ENCODE measurements at regions of chr6 and their contacts with region 1.

Region 1: GRCh38 chr6:134938896-134939295 is 11.0 kb downstream of the ALDH8A1 start:
- DNase-seq: no peak
- H3K4me3 ChIP-seq: no peak overlapping the region
- H3K27ac ChIP-seq: no peak overlapping the region
- H3K4me1 ChIP-seq: peaks cover 0 to 3% (median 0%) of the 10 kb centered on the region in 4 experiments; a peak in 1 of 7 replicates
- H3K27me3 ChIP-seq: no peaks in the 10 kb centered on the region
- CTCF ChIP-seq: no peak
- EP300 ChIP-seq: no peak
- POLR2A ChIP-seq: no peak
- RAD21 ChIP-seq: no peak

Region 2: DNA sequence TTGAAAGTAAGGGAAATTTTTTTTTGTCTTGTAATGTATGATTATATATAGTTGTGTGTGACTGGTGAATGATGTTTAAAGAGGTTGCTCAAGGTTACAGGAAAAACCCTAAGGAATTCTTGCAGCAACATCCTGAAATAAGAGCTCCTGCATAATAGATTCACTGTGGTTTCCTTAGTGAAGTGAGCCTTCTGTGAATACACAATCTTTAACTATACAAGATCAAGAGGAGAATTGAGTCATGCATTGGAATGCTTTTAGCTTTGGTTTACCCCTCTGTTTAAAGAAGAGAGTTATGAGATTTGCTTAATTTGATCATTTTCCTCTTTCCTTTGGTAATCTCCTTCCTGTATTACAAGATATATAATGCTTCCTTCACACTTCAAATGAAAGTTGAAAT is 1839.3 kb before region 1 on chr6:
- CTCF ChIA-PET with region 1: no interaction called
- POLR2A ChIA-PET with region 1: no interaction called
- DNase-seq: no peak
- H3K4me3 ChIP-seq: no peak overlapping the region
- H3K27ac ChIP-seq: no peak overlapping the region
- H3K4me1 ChIP-seq: 0 out of 7 replicates have a peak, but pooled peaks cover 0 to 2% (median 0%) of the 10 kb centered on the region in 4 experiments
- H3K27me3 ChIP-seq: no peaks in the 10 kb centered on the region
- CTCF ChIP-seq: no peak
- EP300 ChIP-seq: no peak
- POLR2A ChIP-seq: no peak
- RAD21 ChIP-seq: no peak

Region 3: DNA sequence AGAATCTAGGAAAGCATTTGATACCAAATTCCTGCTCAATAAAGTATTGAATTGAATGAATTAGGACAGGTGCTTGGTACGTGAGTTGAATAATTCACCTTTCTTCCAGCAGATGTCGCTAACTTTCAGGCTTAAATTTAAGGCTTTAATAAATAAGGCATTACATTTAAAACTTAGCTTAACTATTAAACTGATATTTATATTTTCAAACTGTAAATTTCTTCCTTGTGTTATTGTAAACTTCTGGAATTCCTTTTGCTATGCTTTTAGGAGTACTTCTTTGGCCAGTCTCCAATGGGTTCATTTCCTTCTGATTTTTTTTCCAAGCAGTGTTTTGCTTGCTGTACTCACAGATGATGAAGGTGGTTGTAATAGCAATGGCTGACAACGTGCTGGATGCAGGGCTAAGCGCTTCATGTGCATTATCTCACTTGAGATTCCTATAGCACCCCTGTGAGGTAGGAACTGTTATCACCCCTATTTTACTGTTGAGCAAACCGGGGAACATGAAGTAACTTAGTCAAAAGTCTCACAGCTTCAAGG is 815.2 kb before region 1 on chr6:
- CTCF ChIA-PET with region 1: interaction called, 19 read pairs
- POLR2A ChIA-PET with region 1: no interaction called
- DNase-seq: no peak
- H3K4me3 ChIP-seq: no peak overlapping the region
- H3K27ac ChIP-seq: no peak overlapping the region
- H3K4me1 ChIP-seq: no peaks in the 10 kb centered on the region
- H3K27me3 ChIP-seq: no peaks in the 10 kb centered on the region
- CTCF ChIP-seq: peak in 2 of 3 experiments; percentile 37 to 52; a peak in 3 of 4 replicates
- EP300 ChIP-seq: no peak
- POLR2A ChIP-seq: no peak; a peak in 1 of 3 replicates
- RAD21 ChIP-seq: peak; percentile 36 to 38

Region 4: GRCh38 chr6:134822920-134823709 is 115.8 kb before region 1 on chr6:
- CTCF ChIA-PET with region 1: interaction called, 15 read pairs
- POLR2A ChIA-PET with region 1: no interaction called
- DNase-seq: peak in 1 of 2 experiments; percentile 44
- H3K4me3 ChIP-seq: no peak overlapping the region
- H3K27ac ChIP-seq: no peak overlapping the region
- H3K4me1 ChIP-seq: no peaks in the 10 kb centered on the region
- H3K27me3 ChIP-seq: no peaks in the 10 kb centered on the region
- CTCF ChIP-seq: peak; percentile 26 to 99 (median 92)
- EP300 ChIP-seq: no peak
- POLR2A ChIP-seq: no peak
- RAD21 ChIP-seq: peak; percentile 100

Region 5: GRCh38 chr6:134908906-134909516 is 29.9 kb before region 1 on chr6:
- CTCF ChIA-PET with region 1: interaction called, 18 read pairs
- POLR2A ChIA-PET with region 1: no interaction called
- DNase-seq: no peak
- H3K4me3 ChIP-seq: no peak overlapping the region
- H3K27ac ChIP-seq: no peak overlapping the region
- H3K4me1 ChIP-seq: no peaks in the 10 kb centered on the region
- H3K27me3 ChIP-seq: no peaks in the 10 kb centered on the region
- CTCF ChIP-seq: no peak
- EP300 ChIP-seq: no peak
- POLR2A ChIP-seq: no peak
- RAD21 ChIP-seq: no peak

Region 6: DNA sequence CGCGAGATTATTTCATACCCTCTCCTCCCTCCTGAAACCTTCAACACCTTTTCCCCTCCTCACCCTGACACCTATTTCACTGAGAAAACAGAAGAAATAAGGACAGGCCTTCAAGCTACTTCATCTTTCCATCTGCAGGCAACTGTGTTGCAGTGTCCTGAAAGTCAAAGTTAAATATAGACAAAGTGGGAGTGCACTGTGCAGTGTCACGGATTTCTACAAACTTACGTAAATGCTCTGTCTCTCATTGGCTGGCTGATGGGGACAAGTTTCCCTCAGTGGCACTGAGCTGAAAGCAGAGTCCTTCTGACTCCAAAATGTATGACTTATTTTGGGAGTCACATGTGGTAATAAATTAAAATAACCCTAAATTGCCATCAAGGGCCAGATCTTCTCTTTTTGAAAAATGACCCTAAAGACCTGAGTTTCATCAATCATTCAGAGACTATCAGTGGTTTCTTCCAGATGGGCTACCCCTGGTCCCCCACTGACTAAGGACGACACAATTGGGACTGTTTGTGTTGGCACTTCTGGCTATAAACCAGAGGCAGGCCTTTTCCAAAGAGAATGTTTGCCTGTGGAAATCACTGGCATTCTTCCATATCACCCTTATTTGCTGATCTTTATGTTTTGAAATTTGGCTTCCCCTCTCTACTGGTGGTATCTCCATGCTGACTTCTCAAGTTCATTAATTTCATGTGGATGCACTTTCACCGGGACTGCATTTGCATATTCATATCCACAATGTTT is 10.6 kb before region 1 on chr6:
- CTCF ChIA-PET with region 1: interaction called, 38 read pairs
- POLR2A ChIA-PET with region 1: interaction called, 4 read pairs
- DNase-seq: no peak
- H3K4me3 ChIP-seq: no peak overlapping the region
- H3K27ac ChIP-seq: no peak overlapping the region
- H3K4me1 ChIP-seq: no peaks in the 10 kb centered on the region
- H3K27me3 ChIP-seq: no peaks in the 10 kb centered on the region
- CTCF ChIP-seq: no peak
- EP300 ChIP-seq: no peak
- POLR2A ChIP-seq: no peak
- RAD21 ChIP-seq: no peak